Activated T-helper 1 cell treated with anti-CD3 and anti-CD28 coated beads, Interleukin-12 subunit alpha, Interleukin-12 subunit beta, Interleukin-2, Interleukin-4 antibody, amounts not matched to agents 30 ng/mL and 10 ng/mL and 1 ng/mL, durations not matched to agents 14 hours and 24 hours and 36 hours (primary cell): ENCODE measurements at regions of chr11 and their contacts with region 1.

Region 1: DNA sequence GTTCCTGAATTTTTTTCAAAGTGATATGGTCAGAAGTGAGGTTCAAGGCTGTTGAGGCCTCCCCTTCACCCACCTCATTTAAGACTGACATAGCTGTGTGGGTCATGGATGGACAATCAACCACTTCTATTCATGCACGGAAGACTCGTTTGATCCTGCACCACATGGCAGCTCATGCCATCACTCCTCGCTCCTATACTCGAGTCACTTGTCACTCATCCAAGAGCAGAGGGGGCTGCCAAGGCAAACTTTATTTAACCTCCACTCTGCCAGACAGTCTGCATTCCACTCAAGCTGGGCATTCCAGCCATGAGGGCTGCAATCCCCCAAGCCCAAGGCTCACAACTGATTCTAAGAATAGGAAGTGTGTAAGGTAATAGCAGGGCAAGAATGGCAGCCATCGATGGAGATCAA is 34.1 kb downstream of the SNX19 start:
- DNase-seq: no peak
- H3K4me3 Mint-ChIP-seq: no peak overlapping the region
- H3K27ac Mint-ChIP-seq: peak overlapping the region; percentile 19
- H3K4me1 Mint-ChIP-seq: peaks cover 11% of the 10 kb centered on the region
- H3K27me3 Mint-ChIP-seq: no peaks in the 10 kb centered on the region

Region 2: DNA sequence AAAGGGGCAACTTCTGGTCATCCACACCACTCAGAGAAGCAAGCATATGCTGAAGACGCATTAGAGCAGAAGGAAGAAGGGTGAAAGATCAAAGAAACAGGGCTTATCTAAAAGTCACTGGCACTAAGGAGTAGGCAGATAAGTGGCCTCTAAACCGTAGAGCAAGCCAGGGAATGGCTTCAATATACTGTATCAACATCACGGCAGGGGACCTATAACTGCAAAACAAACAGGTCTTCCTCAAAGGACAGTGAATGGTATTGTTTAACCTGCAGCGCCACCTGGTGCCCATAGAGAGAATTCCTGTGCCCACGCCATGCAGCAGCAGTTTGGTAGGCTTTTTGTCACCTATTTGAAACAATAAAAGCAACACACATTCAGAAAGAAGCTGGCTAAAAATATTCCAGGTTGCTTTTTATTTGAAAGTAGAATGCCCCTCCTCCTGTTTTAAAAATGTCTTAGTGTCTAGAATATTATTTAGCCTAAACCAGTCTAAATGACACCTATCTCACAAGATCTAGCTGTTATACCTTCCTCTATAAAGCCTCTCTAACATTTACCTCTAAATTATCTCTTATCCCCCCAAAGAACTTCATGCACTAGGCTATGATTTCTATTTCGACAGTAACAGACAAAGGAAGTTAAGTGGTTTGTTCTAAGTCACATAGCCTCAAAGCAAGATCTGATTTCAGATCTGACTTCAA is 12.3 kb after region 1 on chr11:
- intact Hi-C with region 1: loop called (anchors 1 kb)
- DNase-seq: peak; percentile 46
- H3K4me3 Mint-ChIP-seq: no peak overlapping the region
- H3K27ac Mint-ChIP-seq: no peak overlapping the region
- H3K4me1 Mint-ChIP-seq: no peaks in the 10 kb centered on the region
- H3K27me3 Mint-ChIP-seq: no peaks in the 10 kb centered on the region